ENCODE measurements at regions of chr5 and their contacts with region 1.

Region 1: DNA sequence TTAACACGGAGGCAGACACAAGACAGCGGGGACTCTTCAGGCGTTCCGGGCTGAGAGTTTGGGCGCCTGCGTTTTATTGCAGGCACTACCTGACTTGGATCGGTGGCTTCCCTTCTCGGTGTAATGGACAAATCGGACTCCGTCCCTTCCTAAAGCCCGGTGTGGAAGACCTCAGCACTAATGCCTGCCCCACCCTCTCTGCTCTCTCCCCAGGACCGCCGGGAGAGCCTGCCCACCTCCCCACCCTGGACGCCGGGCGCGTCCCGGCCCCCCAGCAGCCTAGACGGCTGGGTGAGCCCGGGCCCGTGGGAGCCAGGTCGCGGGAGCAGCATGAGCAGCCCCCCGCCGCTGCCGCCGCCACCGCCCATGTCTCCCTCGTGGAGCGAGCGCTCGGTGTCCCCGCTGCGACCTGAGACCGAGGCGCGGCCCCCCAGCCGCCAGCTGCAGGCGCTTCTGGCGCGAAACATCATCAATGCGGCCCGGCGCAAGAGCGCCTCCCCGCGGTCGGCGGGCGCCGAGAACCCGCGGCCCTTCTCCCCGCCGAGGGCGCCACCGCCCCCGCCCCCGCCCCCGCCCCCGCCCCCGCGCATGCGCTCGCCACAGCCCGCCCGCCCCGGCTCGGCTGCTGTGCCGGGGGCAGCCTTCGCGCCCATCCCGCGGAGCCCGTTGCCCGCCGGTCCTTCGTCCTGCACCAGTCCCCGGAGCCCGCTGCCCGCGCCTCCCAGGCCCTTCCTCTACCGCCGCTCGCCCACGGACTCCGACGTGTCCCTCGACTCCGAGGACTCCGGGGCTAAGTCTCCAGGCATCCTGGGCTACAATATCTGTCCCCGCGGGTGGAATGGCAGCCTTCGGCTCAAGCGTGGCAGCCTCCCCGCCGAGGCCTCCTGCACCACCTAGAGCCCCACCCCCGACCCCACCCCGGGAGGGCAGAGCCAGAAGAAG is 4.6 kb upstream of the MYOZ3 start:
- DNase-seq: peak in 1 of 2 donors; percentile 85
- H3K4me3 ChIP-seq: peak overlapping the region; percentile 46 to 59
- H3K27ac ChIP-seq: peak overlapping the region; percentile 81
- H3K4me1 ChIP-seq: peaks cover 0 to 73% (median 48%) of the 10 kb centered on the region in 4 donors
- H3K27me3 ChIP-seq: no peaks in the 10 kb centered on the region
- CTCF ChIP-seq: peak; percentile 59 to 68

Region 2: DNA sequence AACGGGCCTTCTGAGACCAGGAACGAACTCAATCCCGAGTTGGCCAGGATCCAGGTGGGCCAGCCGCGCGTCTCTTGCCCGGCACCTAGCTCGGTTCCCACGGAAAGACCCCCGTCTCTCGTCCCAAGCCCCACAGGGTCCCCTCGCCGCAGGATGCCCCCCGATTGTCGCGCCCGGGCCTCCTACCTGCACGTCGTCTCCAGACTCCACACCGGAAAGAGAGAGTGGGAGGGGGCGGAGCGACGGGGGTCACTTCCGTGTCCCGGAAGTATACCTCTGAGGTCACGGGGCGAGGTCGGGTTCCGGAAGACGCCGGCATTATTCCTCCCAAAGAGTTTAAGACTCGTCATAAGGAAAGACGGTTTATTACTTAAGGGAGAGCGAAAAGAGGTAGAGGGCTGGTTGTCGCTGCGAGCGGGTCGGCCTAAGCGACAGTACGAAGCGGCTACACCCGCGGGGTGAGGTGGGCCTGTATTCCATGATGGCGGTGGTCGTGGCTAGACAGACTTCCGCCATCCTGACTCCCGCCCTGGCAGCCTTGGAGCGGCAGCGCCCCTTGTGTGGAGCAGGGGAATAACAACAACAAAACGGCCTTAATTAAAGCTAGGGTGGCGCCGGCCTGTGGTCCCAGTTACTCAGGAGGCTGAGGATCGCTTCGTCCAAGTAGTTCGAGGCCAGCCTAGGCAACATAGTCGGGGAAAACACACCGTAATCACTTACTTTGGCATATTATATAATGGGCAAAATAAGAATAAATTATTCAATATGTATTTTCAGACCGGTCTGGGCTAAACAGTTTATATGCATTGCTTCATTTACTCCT is 206.7 kb before region 1 on chr5 and contains the start of gene RPS14:
- intact Hi-C with region 1: loop called (anchors 10 kb)
- DNase-seq: peak; percentile 94 to 96
- H3K4me3 ChIP-seq: peak within 1 kb of the TSS; percentile 68 to 69
- H3K27ac ChIP-seq: peak within 1 kb of the TSS; percentile 89 to 94
- H3K4me1 ChIP-seq: peaks cover 0 to 25% (median 14%) of the 10 kb centered on the region in 4 donors
- H3K27me3 ChIP-seq: no peaks in the 10 kb centered on the region
- CTCF ChIP-seq: peak; percentile 91 to 92

Region 3: GRCh38 chr5:150560401-150561193 is 95.9 kb before region 1 on chr5:
- intact Hi-C with region 1: loop called (anchors 2 kb)
- DNase-seq: peak; percentile 86 to 93
- H3K4me3 ChIP-seq: no peak overlapping the region
- H3K27ac ChIP-seq: no peak overlapping the region
- H3K4me1 ChIP-seq: peaks cover 0 to 22% (median 8%) of the 10 kb centered on the region in 4 donors
- H3K27me3 ChIP-seq: no peaks in the 10 kb centered on the region
- CTCF ChIP-seq: peak; percentile 91 to 93

Region 4: DNA sequence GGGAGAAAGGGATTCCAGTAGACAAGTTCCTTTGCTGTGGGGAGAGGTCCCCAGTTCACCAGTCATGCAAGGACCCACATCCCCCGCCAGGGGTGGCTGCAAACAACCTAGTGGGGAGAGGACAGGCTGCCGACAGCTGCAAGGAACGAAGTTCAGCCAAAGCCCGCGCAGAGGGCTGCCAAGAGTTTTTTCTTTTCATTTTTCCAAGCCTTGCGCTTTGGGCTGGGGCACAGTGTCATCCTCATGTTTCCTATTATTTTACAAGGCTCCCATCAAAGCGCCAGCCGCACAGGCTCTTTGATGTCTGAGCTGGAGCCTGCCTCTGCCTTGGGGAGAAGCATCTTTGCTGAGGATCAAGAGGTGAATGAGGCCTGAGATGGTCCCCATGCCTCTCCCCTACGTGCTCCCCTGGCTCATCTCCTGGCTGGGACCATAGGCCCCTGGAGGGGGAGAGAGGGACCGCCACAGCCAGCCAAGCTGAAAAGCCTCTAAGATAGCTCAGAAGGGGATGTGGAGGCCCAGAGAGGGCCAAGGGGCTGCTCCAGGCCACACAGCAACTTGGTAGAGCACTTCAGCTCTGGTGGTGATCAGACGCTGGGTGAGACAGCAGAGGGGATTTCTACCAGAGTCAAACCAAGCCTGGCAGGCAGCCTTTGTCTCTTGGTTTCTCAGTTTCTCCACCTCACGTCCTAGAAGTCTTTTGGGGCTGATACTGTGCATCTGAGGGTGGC is 66.4 kb before region 1 on chr5:
- intact Hi-C with region 1: loop called (anchors 2 kb)
- DNase-seq: peak; percentile 79 to 88
- H3K4me3 ChIP-seq: no peak overlapping the region
- H3K27ac ChIP-seq: peak overlapping the region; percentile 59 to 63
- H3K4me1 ChIP-seq: peaks cover 5 to 53% (median 44%) of the 10 kb centered on the region in 4 donors
- H3K27me3 ChIP-seq: no peaks in the 10 kb centered on the region
- CTCF ChIP-seq: peak; percentile 86 to 91

Measured in tibial artery (tissue), 4 donors.